Caco-2 (cell line): ENCODE measurements at regions of chr15 and their contacts with region 1.

Region 1: DNA sequence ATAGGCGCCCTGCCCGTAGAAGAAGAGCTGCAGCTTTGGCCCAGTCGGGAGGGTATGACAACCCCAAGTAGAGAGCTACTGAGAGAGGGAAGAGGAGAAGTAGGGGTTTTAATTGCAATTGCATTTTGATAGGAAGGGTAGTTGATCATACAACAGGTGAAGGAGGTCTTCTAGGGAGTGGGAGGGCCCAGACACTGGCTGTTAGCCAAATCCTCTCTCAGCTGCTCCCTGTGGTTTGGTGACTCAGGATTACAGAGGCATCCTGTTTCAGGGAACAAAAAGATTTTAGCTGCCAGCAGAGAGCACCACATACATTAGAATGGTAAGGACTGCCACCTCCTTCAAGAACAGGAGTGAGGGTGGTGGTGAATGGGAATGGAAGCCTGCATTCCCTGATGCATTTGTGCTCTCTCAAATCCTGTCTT is 408.9 kb upstream of the THBS1 start:
- DNase-seq: peak; percentile 71
- H3K4me3 ChIP-seq: no peak overlapping the region
- H3K4me3 Mint-ChIP-seq: no peak overlapping the region
- H3K27ac Mint-ChIP-seq: peak overlapping the region; percentile 19
- H3K4me1 ChIP-seq: peaks cover 16% of the 10 kb centered on the region
- H3K4me1 Mint-ChIP-seq: peaks cover 19% of the 10 kb centered on the region
- H3K27me3 ChIP-seq: no peaks in the 10 kb centered on the region
- H3K27me3 Mint-ChIP-seq: no peaks in the 10 kb centered on the region
- CTCF ChIP-seq: peak in 1 of 2 experiments; percentile 28

Region 2: DNA sequence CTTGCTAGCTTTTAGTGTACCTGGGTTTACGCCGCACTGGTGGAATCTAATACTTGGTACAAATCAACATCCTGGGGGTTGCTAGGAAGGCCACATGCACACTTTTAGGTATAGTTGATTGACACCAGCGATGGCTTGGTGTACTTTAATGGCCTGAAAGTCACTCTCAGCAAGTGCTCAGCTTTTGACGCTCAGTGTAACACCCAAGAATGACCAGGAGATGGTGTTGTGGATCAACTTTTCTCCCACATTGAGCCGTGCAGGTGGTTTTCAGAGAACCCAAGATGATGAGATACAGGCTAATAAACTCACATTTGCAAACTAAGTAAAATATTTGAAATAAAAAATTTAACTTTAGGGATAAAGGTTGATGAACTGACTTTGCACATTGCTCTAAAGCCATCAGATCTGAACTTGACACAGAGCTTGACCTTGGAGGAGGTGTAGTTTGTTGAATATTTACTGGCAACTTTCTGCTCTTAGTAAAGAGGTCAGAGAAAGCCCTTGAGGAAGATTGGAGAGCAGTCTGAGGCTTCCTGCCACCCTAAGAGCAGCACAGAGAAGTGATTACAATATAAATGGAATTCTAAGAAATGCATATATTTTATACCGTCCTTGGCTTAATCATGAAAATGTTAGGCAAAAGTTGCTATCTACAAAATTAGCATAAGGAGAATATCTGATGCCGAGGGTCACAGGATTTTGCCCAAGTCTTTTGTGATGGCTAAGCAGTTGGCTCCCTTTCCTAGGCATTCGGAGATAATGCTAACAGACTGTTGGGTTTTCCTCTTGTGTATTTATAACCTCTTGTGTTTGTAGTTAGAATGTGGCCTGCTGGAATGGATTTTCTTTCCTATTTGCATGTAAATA is 463.9 kb before region 1 on chr15:
- CTCF ChIA-PET with region 1: no interaction called
- POLR2A ChIA-PET with region 1: no interaction called
- intact Hi-C with region 1: loop called (anchors 5 kb)
- DNase-seq: peak in 1 of 2 experiments; percentile 62
- H3K4me3 ChIP-seq: no peak overlapping the region
- H3K4me3 Mint-ChIP-seq: no peak overlapping the region
- H3K27ac Mint-ChIP-seq: no peak overlapping the region
- H3K4me1 ChIP-seq: peaks cover 1% of the 10 kb centered on the region; the same call in 1 of the 2 replicates
- H3K4me1 Mint-ChIP-seq: no peaks in the 10 kb centered on the region
- H3K27me3 ChIP-seq: no peaks in the 10 kb centered on the region
- H3K27me3 Mint-ChIP-seq: no peaks in the 10 kb centered on the region
- CTCF ChIP-seq: peak; percentile 68 to 70

Region 3: DNA sequence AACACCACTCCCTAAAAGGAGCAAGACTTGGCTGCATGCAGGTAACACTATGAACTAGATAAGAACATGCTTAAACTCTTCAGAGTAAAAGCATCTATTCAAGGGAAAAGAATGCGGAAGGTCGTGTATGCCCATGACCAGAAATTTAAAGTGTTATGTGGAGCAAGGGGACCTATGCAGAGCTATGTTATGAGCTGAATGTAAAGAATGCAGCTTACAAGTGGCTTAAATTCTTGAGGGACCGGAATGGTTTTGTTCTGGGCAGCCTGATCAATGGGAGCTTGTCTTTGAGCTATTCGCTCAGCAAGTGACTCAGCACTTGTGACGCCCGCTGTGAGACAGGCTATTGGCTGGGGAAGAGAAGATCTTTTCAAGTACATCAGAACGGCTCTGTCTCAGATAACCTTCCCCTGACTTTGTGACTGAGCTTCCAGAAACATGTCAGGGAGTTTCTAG is 41.5 kb after region 1 on chr15:
- CTCF ChIA-PET with region 1: interaction called, 3 read pairs
- POLR2A ChIA-PET with region 1: no interaction called
- intact Hi-C with region 1: loop called (anchors 1 kb)
- DNase-seq: peak; percentile 82 to 92
- H3K4me3 ChIP-seq: no peak overlapping the region
- H3K4me3 Mint-ChIP-seq: peak overlapping the region; percentile 57
- H3K27ac Mint-ChIP-seq: peak overlapping the region; percentile 97
- H3K4me1 ChIP-seq: peaks cover 17% of the 10 kb centered on the region
- H3K4me1 Mint-ChIP-seq: peaks cover 19% of the 10 kb centered on the region
- H3K27me3 ChIP-seq: no peaks in the 10 kb centered on the region
- H3K27me3 Mint-ChIP-seq: no peaks in the 10 kb centered on the region
- CTCF ChIP-seq: no peak

Region 4: DNA sequence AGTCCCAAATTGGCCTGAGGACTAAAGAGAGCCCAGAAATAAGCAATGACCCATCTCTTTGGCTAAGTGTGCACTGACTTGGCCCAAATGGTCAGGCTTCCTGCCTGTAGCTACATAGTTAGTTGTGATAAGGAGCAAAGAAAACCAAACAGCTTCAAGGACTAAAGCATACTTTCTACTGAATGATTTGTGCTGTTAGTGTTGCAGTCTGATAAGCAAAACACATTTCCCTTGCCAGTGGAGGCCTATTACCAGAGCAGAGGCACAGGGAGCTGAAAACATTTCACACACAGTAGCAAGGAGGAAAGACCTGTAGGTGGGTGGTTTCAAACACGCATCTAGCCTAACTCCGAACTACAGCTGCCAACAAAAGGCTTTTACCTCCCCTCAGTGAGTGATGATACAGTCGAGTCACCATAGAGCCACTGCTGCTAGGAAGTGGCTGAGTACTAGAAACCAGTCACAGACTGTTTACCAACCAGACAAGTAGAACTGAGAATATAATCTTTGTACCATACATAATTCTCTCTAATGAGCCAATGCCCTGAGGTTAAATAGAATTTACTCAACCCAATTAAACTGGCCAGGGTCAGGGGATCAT is 186.6 kb after region 1 on chr15:
- CTCF ChIA-PET with region 1: no interaction called
- POLR2A ChIA-PET with region 1: no interaction called
- intact Hi-C with region 1: loop called (anchors 10 kb)
- DNase-seq: no peak
- H3K4me3 ChIP-seq: no peak overlapping the region
- H3K4me3 Mint-ChIP-seq: no peak overlapping the region
- H3K27ac Mint-ChIP-seq: peak overlapping the region; percentile 45
- H3K4me1 ChIP-seq: peaks cover 41% of the 10 kb centered on the region
- H3K4me1 Mint-ChIP-seq: peaks cover 24% of the 10 kb centered on the region
- H3K27me3 ChIP-seq: no peaks in the 10 kb centered on the region
- H3K27me3 Mint-ChIP-seq: no peaks in the 10 kb centered on the region
- CTCF ChIP-seq: no peak

Region 5: GRCh38 chr15:39756806-39757522 is 585.0 kb after region 1 on chr15:
- CTCF ChIA-PET with region 1: interaction called, 4 read pairs
- POLR2A ChIA-PET with region 1: no interaction called
- intact Hi-C with region 1: loop called (anchors 2 kb)
- DNase-seq: peak in 1 of 2 experiments; percentile 58
- H3K4me3 ChIP-seq: no peak overlapping the region
- H3K4me3 Mint-ChIP-seq: no peak overlapping the region
- H3K27ac Mint-ChIP-seq: peak overlapping the region; percentile 45
- H3K4me1 ChIP-seq: peaks cover 7% of the 10 kb centered on the region; the same call in 1 of the 2 replicates
- H3K4me1 Mint-ChIP-seq: peaks cover 24% of the 10 kb centered on the region
- H3K27me3 ChIP-seq: no peaks in the 10 kb centered on the region
- H3K27me3 Mint-ChIP-seq: no peaks in the 10 kb centered on the region
- CTCF ChIP-seq: peak; percentile 56 to 74